Head of caudate nucleus (tissue), 42 donors: ENCODE measurements at regions of chr1 and their contacts with region 1.

Region 1: GRCh38 chr1:200279810-200280411 is 129.9 kb downstream of the ZNF281 start:
- DNase-seq: peak in 33 of 42 donors; percentile 14 to 86 (median 56)

Region 2: GRCh38 chr1:200231787-200232231 is 48.1 kb before region 1 on chr1:
- intact Hi-C with region 1: no loop called
- DNase-seq: no peak

Region 3: GRCh38 chr1:200488375-200489165 is 208.7 kb after region 1 on chr1:
- intact Hi-C with region 1: loop called (anchors 5 kb)
- DNase-seq: peak in 37 of 42 donors; percentile 14 to 89 (median 68)